Mammary epithelial cell (primary cell): ENCODE measurements at regions of chr18 and their contacts with region 1.

Region 1: GRCh38 chr18:79169958-79170555 is 100.9 kb downstream of the ATP9B start:
- DNase-seq: peak; percentile 11
- H3K4me3 ChIP-seq: no peak overlapping the region
- H3K27ac ChIP-seq: no peak overlapping the region
- H3K4me1 ChIP-seq: peaks cover 3% of the 10 kb centered on the region
- H3K27me3 ChIP-seq: no peaks in the 10 kb centered on the region
- CTCF ChIP-seq: no peak

Region 2: GRCh38 chr18:79077181-79077580 is 92.9 kb before region 1 on chr18:
- CTCF ChIA-PET with region 1: no interaction called
- dilution Hi-C with region 1: loop called (anchors 5 kb)
- in situ Hi-C with region 1: no loop called
- intact Hi-C with region 1: no loop called
- DNase-seq: no peak
- H3K4me3 ChIP-seq: no peak overlapping the region
- H3K27ac ChIP-seq: no peak overlapping the region
- H3K4me1 ChIP-seq: no peaks in the 10 kb centered on the region
- H3K27me3 ChIP-seq: no peaks in the 10 kb centered on the region
- CTCF ChIP-seq: no peak

Region 3: GRCh38 chr18:79108549-79109215 is 61.4 kb before region 1 on chr18:
- CTCF ChIA-PET with region 1: no interaction called
- dilution Hi-C with region 1: loop called (anchors 5 kb)
- in situ Hi-C with region 1: no loop called
- intact Hi-C with region 1: no loop called
- DNase-seq: no peak
- H3K4me3 ChIP-seq: no peak overlapping the region
- H3K27ac ChIP-seq: no peak overlapping the region
- H3K4me1 ChIP-seq: no peaks in the 10 kb centered on the region
- H3K27me3 ChIP-seq: no peaks in the 10 kb centered on the region
- CTCF ChIP-seq: no peak

Region 4: GRCh38 chr18:79784965-79785770 is 615.1 kb after region 1 on chr18:
- CTCF ChIA-PET with region 1: no interaction called
- dilution Hi-C with region 1: no loop called
- in situ Hi-C with region 1: no loop called
- intact Hi-C with region 1: no loop called
- DNase-seq: peak; percentile 12
- H3K4me3 ChIP-seq: no peak overlapping the region
- H3K27ac ChIP-seq: no peak overlapping the region
- H3K4me1 ChIP-seq: peaks cover 4% of the 10 kb centered on the region
- H3K27me3 ChIP-seq: peaks cover 6% of the 10 kb centered on the region
- CTCF ChIP-seq: no peak